IMR-90 (cell line): ENCODE measurements at regions of chr2 and their contacts with region 1.

Region 1: DNA sequence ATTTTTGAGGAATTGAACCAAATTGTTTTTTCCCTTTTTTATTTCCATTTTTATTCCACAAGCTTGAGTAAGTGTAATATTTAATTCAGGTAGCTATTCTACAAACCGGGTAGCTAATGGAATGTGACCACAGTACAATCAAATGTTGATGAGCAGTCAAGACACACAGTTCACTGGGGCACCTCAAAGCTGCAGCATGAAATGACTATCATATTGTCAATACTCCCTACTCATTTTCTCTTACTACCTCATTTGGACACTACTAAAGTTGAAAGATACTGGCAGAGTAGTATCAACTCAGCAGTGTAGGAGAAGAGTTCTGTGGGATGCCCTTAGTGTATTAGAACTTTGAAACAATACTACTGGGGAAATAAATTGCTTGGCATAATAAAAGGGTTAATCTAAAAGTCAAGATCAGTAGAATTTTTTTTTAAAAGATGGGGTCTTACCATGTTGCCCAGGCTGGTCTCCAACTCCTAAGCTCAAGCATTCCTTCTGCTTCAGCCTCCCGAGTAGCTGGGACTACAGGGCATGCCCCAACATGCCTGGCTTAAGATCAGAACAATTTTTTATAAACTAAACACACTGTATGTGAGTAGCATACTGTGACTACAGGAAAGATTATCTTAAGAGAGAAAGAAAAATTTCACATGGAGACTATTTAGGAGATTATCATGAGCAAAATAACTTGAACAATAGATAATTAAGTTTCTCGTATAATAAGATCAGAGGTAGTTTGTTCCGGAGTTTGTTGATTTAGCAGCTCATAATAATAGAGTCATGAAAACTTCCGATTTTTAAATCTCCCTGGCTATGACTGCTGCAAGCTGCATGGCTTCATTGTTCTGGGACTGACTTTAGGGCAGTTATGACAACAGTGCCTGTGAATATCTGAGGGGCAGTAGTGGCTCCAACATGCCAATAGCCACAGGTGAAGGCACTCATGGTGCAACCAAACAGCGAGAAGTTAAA is 43.7 kb downstream of the MYO3B start:
- DNase-seq: peak; percentile 76
- ATAC-seq: peak; percentile 84
- H3K4me3 ChIP-seq: peak overlapping the region; percentile 8; the same call in 1 of the 2 replicates
- H3K27ac ChIP-seq: peak overlapping the region; percentile 99
- H3K4me1 ChIP-seq: peaks cover 12% of the 10 kb centered on the region
- H3K27me3 ChIP-seq: no peaks in the 10 kb centered on the region
- CTCF ChIP-seq: no peak
- POLR2A ChIP-seq: no peak
- RAD21 ChIP-seq: no peak

Region 2: GRCh38 chr2:169743549-169743948 is 478.1 kb before region 1 on chr2:
- CTCF ChIA-PET with region 1: no interaction called
- POLR2A ChIA-PET with region 1: no interaction called
- dilution Hi-C with region 1: no loop called
- in situ Hi-C with region 1: no loop called
- intact Hi-C with region 1: no loop called
- DNase-seq: no peak
- ATAC-seq: no peak
- H3K4me3 ChIP-seq: no peak overlapping the region
- H3K27ac ChIP-seq: no peak overlapping the region
- H3K4me1 ChIP-seq: no peaks in the 10 kb centered on the region
- H3K27me3 ChIP-seq: no peaks in the 10 kb centered on the region
- CTCF ChIP-seq: no peak
- POLR2A ChIP-seq: no peak
- RAD21 ChIP-seq: no peak

Region 3: DNA sequence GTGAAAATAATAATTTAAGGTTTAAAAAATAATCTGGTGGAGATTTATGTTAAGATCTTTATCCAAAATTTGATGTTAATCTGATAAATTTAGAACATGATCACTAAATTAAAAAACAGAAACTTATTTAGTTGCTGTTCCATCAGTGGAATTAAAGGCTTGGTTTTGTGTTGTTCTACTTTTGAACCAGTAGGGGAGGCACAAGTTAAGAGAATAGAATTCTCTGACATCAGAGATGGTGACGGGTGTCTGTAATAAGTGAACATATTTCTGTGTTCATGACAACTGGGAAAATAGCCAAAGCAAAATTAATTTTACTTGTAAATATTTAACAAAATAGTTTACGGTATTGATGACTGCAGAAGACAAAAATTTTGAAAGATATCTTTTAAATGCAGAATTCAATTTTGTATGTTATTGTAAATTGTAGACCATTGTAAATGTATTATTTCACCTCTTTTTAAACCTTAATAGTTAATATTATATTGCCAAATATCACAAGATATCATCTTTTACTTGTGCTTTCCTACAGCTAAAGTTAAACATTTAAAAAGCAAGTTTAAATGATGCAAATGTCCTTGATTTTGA is 288.4 kb before region 1 on chr2:
- CTCF ChIA-PET with region 1: no interaction called
- POLR2A ChIA-PET with region 1: no interaction called
- dilution Hi-C with region 1: no loop called
- in situ Hi-C with region 1: no loop called
- intact Hi-C with region 1: loop called (anchors 10 kb)
- DNase-seq: peak; percentile 54
- ATAC-seq: peak; percentile 89
- H3K4me3 ChIP-seq: no peak overlapping the region
- H3K27ac ChIP-seq: no peak overlapping the region
- H3K4me1 ChIP-seq: no peaks in the 10 kb centered on the region
- H3K27me3 ChIP-seq: no peaks in the 10 kb centered on the region
- CTCF ChIP-seq: peak; percentile 75
- POLR2A ChIP-seq: no peak
- RAD21 ChIP-seq: peak; percentile 74

Region 4: GRCh38 chr2:169961911-169962310 is 259.7 kb before region 1 on chr2:
- CTCF ChIA-PET with region 1: no interaction called
- POLR2A ChIA-PET with region 1: no interaction called
- dilution Hi-C with region 1: no loop called
- in situ Hi-C with region 1: no loop called
- intact Hi-C with region 1: loop called (anchors 10 kb)
- DNase-seq: peak; percentile 88
- ATAC-seq: peak; percentile 70
- H3K4me3 ChIP-seq: no peak overlapping the region
- H3K27ac ChIP-seq: 0 out of 2 replicates have a peak overlapping the region, but pooled peaks have one; percentile 40
- H3K4me1 ChIP-seq: peaks cover 4% of the 10 kb centered on the region; the same call in 1 of the 2 replicates
- H3K27me3 ChIP-seq: no peaks in the 10 kb centered on the region
- CTCF ChIP-seq: no peak
- POLR2A ChIP-seq: no peak
- RAD21 ChIP-seq: no peak

Region 5: DNA sequence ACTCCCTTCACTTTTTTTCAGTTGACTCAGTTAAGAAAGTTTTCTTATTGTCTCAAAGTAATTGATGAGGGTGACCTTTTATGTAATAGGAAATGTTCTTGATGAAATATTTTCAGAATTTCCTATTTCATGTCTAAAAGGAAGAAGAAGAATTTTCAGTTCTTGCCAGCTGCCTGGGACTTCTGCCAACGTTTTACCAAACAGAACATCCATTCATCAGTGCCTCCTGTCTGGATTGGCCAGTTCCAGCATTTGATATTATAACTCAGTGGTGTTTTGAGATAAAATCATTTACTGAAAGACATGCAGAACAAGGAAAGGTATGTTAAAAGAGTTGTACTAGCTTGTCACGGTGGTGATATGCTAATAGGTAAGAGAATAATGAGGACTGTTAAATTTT is 148.3 kb before region 1 on chr2:
- CTCF ChIA-PET with region 1: no interaction called
- POLR2A ChIA-PET with region 1: interaction called, 10 read pairs
- dilution Hi-C with region 1: no loop called
- in situ Hi-C with region 1: no loop called
- intact Hi-C with region 1: no loop called
- DNase-seq: peak; percentile 71
- ATAC-seq: peak; percentile 42
- H3K4me3 ChIP-seq: no peak overlapping the region
- H3K27ac ChIP-seq: no peak overlapping the region
- H3K4me1 ChIP-seq: no peaks in the 10 kb centered on the region
- H3K27me3 ChIP-seq: no peaks in the 10 kb centered on the region
- CTCF ChIP-seq: no peak
- POLR2A ChIP-seq: no peak
- RAD21 ChIP-seq: no peak

Region 6: DNA sequence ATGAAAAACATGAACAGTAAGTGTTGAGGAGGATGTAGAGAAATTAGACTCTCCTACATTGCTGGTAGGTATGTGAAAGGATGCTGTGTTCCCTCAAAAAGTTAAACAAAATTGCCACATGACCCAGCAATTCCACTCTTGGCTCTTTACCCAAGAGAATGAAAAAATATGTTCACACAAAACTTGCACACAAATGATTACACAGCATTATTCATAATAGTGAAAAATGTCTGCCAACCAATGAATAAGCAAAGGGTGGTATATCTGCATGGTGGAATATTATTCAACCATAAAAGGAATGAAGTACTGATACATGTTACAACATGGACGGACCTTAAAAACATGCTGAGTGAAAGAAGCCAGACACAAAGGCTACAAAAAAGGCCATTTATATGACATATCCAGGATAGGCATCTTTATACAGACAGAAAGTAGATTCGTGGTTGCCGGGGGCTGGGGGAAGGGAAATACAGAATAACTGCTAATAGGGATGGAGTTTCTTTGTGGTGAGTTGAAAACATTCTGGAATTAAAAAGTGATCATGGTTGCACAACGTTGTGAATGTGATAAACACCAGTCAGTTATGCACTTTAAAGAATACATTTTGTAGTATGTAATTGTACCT is 129.1 kb before region 1 on chr2:
- CTCF ChIA-PET with region 1: no interaction called
- POLR2A ChIA-PET with region 1: no interaction called
- dilution Hi-C with region 1: no loop called
- in situ Hi-C with region 1: no loop called
- intact Hi-C with region 1: loop called (anchors 5 kb)
- DNase-seq: peak; percentile 38
- ATAC-seq: peak; percentile 18; the same call in 1 of the 2 replicates
- H3K4me3 ChIP-seq: no peak overlapping the region
- H3K27ac ChIP-seq: no peak overlapping the region
- H3K4me1 ChIP-seq: no peaks in the 10 kb centered on the region
- H3K27me3 ChIP-seq: no peaks in the 10 kb centered on the region
- CTCF ChIP-seq: no peak
- POLR2A ChIP-seq: no peak
- RAD21 ChIP-seq: no peak

Region 7: GRCh38 chr2:170783551-170783950 is 561.9 kb after region 1 on chr2:
- CTCF ChIA-PET with region 1: no interaction called
- POLR2A ChIA-PET with region 1: no interaction called
- dilution Hi-C with region 1: no loop called
- in situ Hi-C with region 1: no loop called
- intact Hi-C with region 1: no loop called
- DNase-seq: no peak
- ATAC-seq: no peak
- H3K4me3 ChIP-seq: no peak overlapping the region
- H3K27ac ChIP-seq: no peak overlapping the region
- H3K4me1 ChIP-seq: no peaks in the 10 kb centered on the region
- H3K27me3 ChIP-seq: no peaks in the 10 kb centered on the region
- CTCF ChIP-seq: no peak
- POLR2A ChIP-seq: no peak
- RAD21 ChIP-seq: no peak

Region 8: DNA sequence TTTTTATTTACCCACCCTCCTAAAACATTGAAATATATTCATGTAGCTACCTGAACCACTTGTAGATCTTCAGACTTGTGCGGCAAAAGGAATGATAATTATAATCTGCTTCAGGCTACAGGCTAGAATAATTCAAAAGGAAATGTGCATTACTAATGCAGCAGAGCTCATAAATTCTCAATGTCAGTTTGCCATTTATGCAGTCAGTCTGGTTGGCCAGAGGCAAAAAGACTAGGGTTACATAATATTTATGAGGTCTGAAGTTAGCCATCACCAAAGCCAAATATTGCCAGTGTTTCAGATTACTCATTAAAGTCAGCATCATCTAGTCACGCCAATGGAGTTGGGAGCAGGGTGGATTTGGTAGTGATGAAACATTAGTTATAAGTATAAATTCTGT is 1817.0 kb after region 1 on chr2:
- CTCF ChIA-PET with region 1: no interaction called
- POLR2A ChIA-PET with region 1: no interaction called
- dilution Hi-C with region 1: no loop called
- in situ Hi-C with region 1: no loop called
- intact Hi-C with region 1: no loop called
- DNase-seq: peak; percentile 38
- ATAC-seq: peak; percentile 14; the same call in 1 of the 2 replicates
- H3K4me3 ChIP-seq: no peak overlapping the region
- H3K27ac ChIP-seq: no peak overlapping the region
- H3K4me1 ChIP-seq: peaks cover 2% of the 10 kb centered on the region; the same call in 1 of the 2 replicates
- H3K27me3 ChIP-seq: no peaks in the 10 kb centered on the region
- CTCF ChIP-seq: no peak
- POLR2A ChIP-seq: no peak
- RAD21 ChIP-seq: no peak